Heart right ventricle (tissue), 16 donors: ENCODE measurements at regions of chr6 and their contacts with region 1.

Region 1: GRCh38 chr6:68876792-68877493 is 241.9 kb downstream of the ADGRB3 start:
- DNase-seq: no peak
- ATAC-seq: no peak
- H3K4me3 ChIP-seq: no peak overlapping the region
- H3K27ac ChIP-seq: no peak overlapping the region
- H3K4me1 ChIP-seq: peaks cover 0 to 6% (median 0%) of the 10 kb centered on the region in 9 donors
- H3K27me3 ChIP-seq: no peaks in the 10 kb centered on the region
- CTCF ChIP-seq: peak in 8 of 9 donors; percentile 17 to 60 (median 50)

Region 2: GRCh38 chr6:68615938-68616337 is 261.0 kb before region 1 on chr6:
- intact Hi-C with region 1: no loop called
- DNase-seq: no peak
- ATAC-seq: no peak
- H3K4me3 ChIP-seq: no peak overlapping the region
- H3K27ac ChIP-seq: no peak overlapping the region
- H3K4me1 ChIP-seq: no peaks in the 10 kb centered on the region
- H3K27me3 ChIP-seq: no peaks in the 10 kb centered on the region
- CTCF ChIP-seq: no peak

Region 3: GRCh38 chr6:68958327-68958726 is 81.4 kb after region 1 on chr6:
- intact Hi-C with region 1: loop called in 3 of 10 experiments (anchors 5 to 10 kb)
- DNase-seq: no peak
- ATAC-seq: no peak
- H3K4me3 ChIP-seq: no peak overlapping the region
- H3K27ac ChIP-seq: no peak overlapping the region
- H3K4me1 ChIP-seq: no peaks in the 10 kb centered on the region
- H3K27me3 ChIP-seq: no peaks in the 10 kb centered on the region
- CTCF ChIP-seq: peak in 5 of 9 donors; percentile 24 to 49 (median 28)

Region 4: GRCh38 chr6:68967549-68968300 is 90.8 kb after region 1 on chr6:
- intact Hi-C with region 1: loop called in 2 of 10 experiments (anchors 2 to 10 kb)
- DNase-seq: peak; percentile 27 to 59
- ATAC-seq: peak in 6 of 8 donors; percentile 47 to 67 (median 60)
- H3K4me3 ChIP-seq: no peak overlapping the region
- H3K27ac ChIP-seq: no peak overlapping the region
- H3K4me1 ChIP-seq: peaks cover 0 to 8% (median 0%) of the 10 kb centered on the region in 9 donors
- H3K27me3 ChIP-seq: no peaks in the 10 kb centered on the region
- CTCF ChIP-seq: peak; percentile 72 to 91 (median 84)

Region 5: DNA sequence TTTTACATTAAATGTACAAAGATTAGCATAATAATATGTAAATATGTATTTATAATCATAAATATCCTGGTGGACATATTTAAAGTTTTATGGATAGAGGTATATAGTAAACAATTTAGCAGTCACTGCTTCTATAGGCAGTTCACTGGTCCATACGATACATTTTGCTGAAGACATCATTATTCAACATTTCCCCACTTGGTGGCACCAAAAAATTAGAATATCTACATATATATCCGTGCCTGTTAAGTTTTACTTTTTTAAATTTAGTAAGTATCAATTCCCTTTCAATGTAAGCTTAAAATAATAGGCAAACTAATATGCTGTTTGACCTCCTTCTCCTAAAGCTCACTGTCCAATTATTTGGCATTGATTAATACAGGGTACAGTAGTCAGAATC is 855.7 kb after region 1 on chr6:
- intact Hi-C with region 1: loop called in 1 of 10 experiments (anchors 5 kb)
- DNase-seq: no peak
- ATAC-seq: no peak
- H3K4me3 ChIP-seq: no peak overlapping the region
- H3K27ac ChIP-seq: no peak overlapping the region
- H3K4me1 ChIP-seq: no peaks in the 10 kb centered on the region
- H3K27me3 ChIP-seq: no peaks in the 10 kb centered on the region
- CTCF ChIP-seq: peak in 4 of 9 donors; percentile 10 to 32 (median 20)